ENCODE measurements at regions of chr2 and their contacts with region 1.

Region 1: GRCh38 chr2:150698016-150698661 is 210.7 kb upstream of the RND3 start:
- H3K4me3 ChIP-seq: no peak overlapping the region
- H3K27ac ChIP-seq: no peak overlapping the region
- H3K4me1 ChIP-seq: no peaks in the 10 kb centered on the region
- CTCF ChIP-seq: no peak

Region 2: GRCh38 chr2:150586858-150587257 is 111.3 kb before region 1 on chr2:
- CTCF ChIA-PET with region 1: no interaction called
- POLR2A ChIA-PET with region 1: no interaction called
- H3K4me3 ChIP-seq: no peak overlapping the region
- H3K27ac ChIP-seq: no peak overlapping the region
- H3K4me1 ChIP-seq: no peaks in the 10 kb centered on the region
- CTCF ChIP-seq: no peak

Region 3: DNA sequence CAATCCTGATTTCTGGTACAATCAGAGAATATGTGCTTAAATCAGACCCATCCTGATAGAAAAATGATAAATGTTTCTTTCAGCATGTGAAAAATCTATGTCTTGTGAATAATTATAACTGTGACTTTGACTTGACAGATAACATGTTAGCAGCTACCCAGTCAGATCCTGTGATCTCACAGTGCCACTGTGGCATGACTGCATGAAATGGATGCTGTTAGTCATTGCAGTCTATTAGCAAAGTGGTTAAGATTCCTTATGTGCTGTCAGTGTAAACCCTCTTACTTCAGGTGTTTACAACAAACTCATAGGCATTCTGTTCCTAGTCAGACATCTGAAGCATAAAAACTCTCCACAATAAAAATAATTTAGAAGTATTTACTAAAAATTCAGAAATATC is 33.9 kb after region 1 on chr2:
- CTCF ChIA-PET with region 1: interaction called, 10 read pairs
- POLR2A ChIA-PET with region 1: no interaction called
- H3K4me3 ChIP-seq: no peak overlapping the region
- H3K27ac ChIP-seq: no peak overlapping the region
- H3K4me1 ChIP-seq: no peaks in the 10 kb centered on the region
- CTCF ChIP-seq: no peak